HEK293 (cell line): ENCODE measurements at regions of chr22 and their contacts with region 1.

Region 1: GRCh38 chr22:31313366-31314147 is 21.3 kb upstream of the PIK3IP1 start:
- H3K4me3 ChIP-seq: no peak overlapping the region
- H3K27ac ChIP-seq: no peak overlapping the region
- H3K4me1 ChIP-seq: no peaks in the 10 kb centered on the region
- CTCF ChIP-seq: peak; percentile 31; the same call in 1 of the 2 replicates

Region 2: DNA sequence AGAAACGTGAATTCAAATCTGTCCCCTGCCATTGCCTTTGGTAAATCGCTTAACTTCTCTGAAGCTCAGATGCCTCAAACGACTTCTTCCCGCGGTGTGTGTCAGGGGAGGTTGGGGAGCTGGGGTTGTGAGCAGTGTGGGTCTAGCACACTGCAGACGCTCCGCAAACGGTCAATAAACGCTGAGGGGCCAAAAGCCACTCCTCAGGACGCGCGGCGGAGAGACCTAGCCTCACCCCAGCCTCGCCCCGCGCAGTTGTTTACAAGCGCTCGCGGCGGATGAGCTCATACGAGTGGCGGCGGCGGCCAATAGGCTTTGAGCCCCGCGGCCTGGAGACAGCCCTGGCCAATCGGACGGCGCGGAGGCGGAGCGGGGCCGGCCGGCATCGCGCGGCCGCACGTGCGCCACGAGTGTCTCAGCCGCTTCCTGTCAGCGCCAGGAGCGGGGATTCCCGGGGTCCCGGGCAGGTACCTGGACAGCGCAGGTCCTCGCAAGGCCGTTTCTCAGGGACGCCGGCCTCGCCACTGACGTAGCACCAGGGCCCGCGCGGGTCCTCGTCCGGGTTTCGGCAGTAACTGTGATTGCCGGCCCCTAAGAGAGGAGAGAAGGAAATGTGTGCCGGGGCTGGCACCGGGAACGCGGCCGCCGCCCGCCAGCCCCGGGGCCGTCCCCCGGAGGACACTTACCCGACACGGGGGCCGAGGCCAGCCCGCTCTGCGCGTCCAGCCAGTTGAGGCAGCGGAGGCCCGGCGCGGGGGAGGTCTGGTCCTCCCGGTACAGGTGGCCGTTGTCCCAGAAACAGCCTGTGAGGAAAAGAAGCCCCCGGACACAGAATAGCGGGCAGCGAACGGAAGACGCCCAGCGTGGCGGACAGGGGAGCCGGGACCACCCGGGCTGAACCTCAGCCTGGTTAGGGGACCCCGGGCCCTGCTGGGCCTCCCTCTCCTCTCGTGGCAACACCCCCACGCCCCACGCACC is 22.8 kb before region 1 on chr22:
- CTCF ChIA-PET with region 1: interaction called, 50 read pairs
- POLR2A ChIA-PET with region 1: interaction called, 6 read pairs
- H3K4me3 ChIP-seq: peak overlapping the region; percentile 50
- H3K27ac ChIP-seq: peak overlapping the region; percentile 54; the same call in 1 of the 2 replicates
- H3K4me1 ChIP-seq: peaks cover 11% of the 10 kb centered on the region; the same call in 1 of the 2 replicates
- CTCF ChIP-seq: no peak

Region 3: GRCh38 chr22:31295831-31296657 is 17.5 kb before region 1 on chr22:
- CTCF ChIA-PET with region 1: interaction called, 100 read pairs
- POLR2A ChIA-PET with region 1: interaction called, 3 read pairs
- H3K4me3 ChIP-seq: no peak overlapping the region
- H3K27ac ChIP-seq: no peak overlapping the region
- H3K4me1 ChIP-seq: peaks cover 11% of the 10 kb centered on the region; the same call in 1 of the 2 replicates
- CTCF ChIP-seq: no peak

Region 4: GRCh38 chr22:31327883-31328696 is 14.5 kb after region 1 on chr22:
- CTCF ChIA-PET with region 1: interaction called, 28 read pairs
- POLR2A ChIA-PET with region 1: no interaction called
- H3K4me3 ChIP-seq: no peak overlapping the region
- H3K27ac ChIP-seq: no peak overlapping the region
- H3K4me1 ChIP-seq: no peaks in the 10 kb centered on the region
- CTCF ChIP-seq: no peak